ENCODE measurements at regions of chr16 and their contacts with region 1.

Region 1: GRCh38 chr16:69579783-69580481 is 14.2 kb downstream of the NFAT5 start:
- DNase-seq: no peak
- H3K4me3 ChIP-seq: no peak overlapping the region
- H3K4me3 Mint-ChIP-seq: no peak overlapping the region
- H3K27ac ChIP-seq: no peak overlapping the region
- H3K27ac Mint-ChIP-seq: no peak overlapping the region
- H3K4me1 ChIP-seq: no peaks in the 10 kb centered on the region
- H3K4me1 Mint-ChIP-seq: no peaks in the 10 kb centered on the region
- H3K27me3 ChIP-seq: no peaks in the 10 kb centered on the region
- H3K27me3 Mint-ChIP-seq: no peaks in the 10 kb centered on the region
- CTCF ChIP-seq: no peak

Region 2: GRCh38 chr16:69542974-69543373 is 37.0 kb before region 1 on chr16:
- intact Hi-C with region 1: no loop called
- DNase-seq: no peak
- H3K4me3 ChIP-seq: no peak overlapping the region
- H3K4me3 Mint-ChIP-seq: no peak overlapping the region
- H3K27ac ChIP-seq: no peak overlapping the region
- H3K27ac Mint-ChIP-seq: no peak overlapping the region
- H3K4me1 ChIP-seq: peaks cover 33 to 34% of the 10 kb centered on the region in 2 donors
- H3K4me1 Mint-ChIP-seq: peaks cover 28% of the 10 kb centered on the region
- H3K27me3 ChIP-seq: no peaks in the 10 kb centered on the region
- H3K27me3 Mint-ChIP-seq: peaks cover 2 to 10% (median 8%) of the 10 kb centered on the region in 3 donors
- CTCF ChIP-seq: no peak

Region 3: GRCh38 chr16:69644790-69645189 is 64.9 kb after region 1 on chr16:
- intact Hi-C with region 1: loop called in 1 of 2 experiments (anchors 10 kb)
- DNase-seq: no peak
- H3K4me3 ChIP-seq: no peak overlapping the region
- H3K4me3 Mint-ChIP-seq: no peak overlapping the region
- H3K27ac ChIP-seq: no peak overlapping the region
- H3K27ac Mint-ChIP-seq: no peak overlapping the region
- H3K4me1 ChIP-seq: no peaks in the 10 kb centered on the region
- H3K4me1 Mint-ChIP-seq: peaks cover 2% of the 10 kb centered on the region
- H3K27me3 ChIP-seq: no peaks in the 10 kb centered on the region
- H3K27me3 Mint-ChIP-seq: no peaks in the 10 kb centered on the region
- CTCF ChIP-seq: no peak

Measured in CD14-positive monocyte (primary cell).